ENCODE measurements at regions of chr1 and their contacts with region 1.

Region 1: GRCh38 chr1:158124999-158125398 is 55.7 kb upstream of the CD1D start:
- DNase-seq: peak; percentile 85
- H3K4me3 Mint-ChIP-seq: no peak overlapping the region
- H3K27ac Mint-ChIP-seq: no peak overlapping the region
- H3K4me1 Mint-ChIP-seq: peaks cover 23% of the 10 kb centered on the region
- H3K27me3 Mint-ChIP-seq: peaks cover 46% of the 10 kb centered on the region
- CTCF ChIP-seq: peak; percentile 91

Region 2: DNA sequence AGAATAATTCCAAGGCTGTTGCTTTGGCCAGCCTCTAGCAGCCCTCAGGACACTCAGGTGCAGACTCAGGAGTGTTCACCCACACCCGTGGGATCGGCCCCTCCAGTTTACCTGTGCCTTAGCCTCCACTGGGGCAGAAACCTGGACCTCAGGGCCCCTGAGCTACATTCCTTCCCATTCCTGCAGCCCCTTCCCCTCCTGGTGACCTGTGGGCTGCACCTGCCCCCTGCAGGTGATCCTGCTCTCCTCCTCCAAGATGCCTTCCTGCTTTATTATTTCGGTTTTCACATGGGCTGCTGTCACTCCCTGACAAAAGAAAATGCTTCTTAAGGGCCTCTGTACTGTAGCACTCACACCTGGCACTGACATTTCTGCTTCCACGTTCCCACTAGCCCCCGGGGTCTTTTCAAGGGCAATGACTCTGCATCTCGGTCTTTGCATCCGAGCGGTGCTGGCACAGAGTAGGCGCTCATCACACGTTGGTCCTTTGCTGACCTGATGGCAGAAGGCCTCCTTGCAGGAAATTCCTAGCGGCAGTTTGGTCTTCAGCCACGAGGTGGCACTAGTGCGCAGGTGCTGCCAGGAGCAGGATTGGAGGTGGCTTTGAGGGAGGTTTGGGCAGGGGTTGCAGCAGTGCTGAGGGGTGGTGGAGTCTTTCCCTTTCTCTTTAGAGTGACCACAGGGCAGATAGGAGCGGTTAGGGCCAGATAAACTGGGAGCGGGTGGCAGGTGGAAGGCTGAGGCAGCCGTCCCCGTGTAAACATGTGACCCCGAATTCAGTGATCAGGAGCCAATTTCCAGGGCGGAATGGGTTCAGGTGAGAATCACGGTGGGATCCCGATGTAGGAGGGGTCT is 961.5 kb before region 1 on chr1:
- CTCF ChIA-PET with region 1: no interaction called
- intact Hi-C with region 1: loop called (anchors 10 kb)
- DNase-seq: peak; percentile 92
- H3K4me3 Mint-ChIP-seq: peak overlapping the region; percentile 60
- H3K27ac Mint-ChIP-seq: peak overlapping the region; percentile 6
- H3K4me1 Mint-ChIP-seq: peaks cover 13% of the 10 kb centered on the region
- H3K27me3 Mint-ChIP-seq: peaks cover 51% of the 10 kb centered on the region
- CTCF ChIP-seq: peak; percentile 88

Region 3: GRCh38 chr1:157496121-157496526 is 628.9 kb before region 1 on chr1:
- CTCF ChIA-PET with region 1: interaction called, 13 read pairs
- intact Hi-C with region 1: no loop called
- DNase-seq: peak; percentile 70
- H3K4me3 Mint-ChIP-seq: no peak overlapping the region
- H3K27ac Mint-ChIP-seq: no peak overlapping the region
- H3K4me1 Mint-ChIP-seq: no peaks in the 10 kb centered on the region
- H3K27me3 Mint-ChIP-seq: peaks cover 53% of the 10 kb centered on the region
- CTCF ChIP-seq: peak; percentile 90

Region 4: GRCh38 chr1:157963713-157964112 is 161.3 kb before region 1 on chr1:
- CTCF ChIA-PET with region 1: interaction called, 175 read pairs
- intact Hi-C with region 1: loop called (anchors 1 kb)
- DNase-seq: peak; percentile 85
- H3K4me3 Mint-ChIP-seq: no peak overlapping the region
- H3K27ac Mint-ChIP-seq: peak overlapping the region; percentile 51
- H3K4me1 Mint-ChIP-seq: peaks cover 57% of the 10 kb centered on the region
- H3K27me3 Mint-ChIP-seq: no peaks in the 10 kb centered on the region
- CTCF ChIP-seq: peak; percentile 97

Region 5: GRCh38 chr1:158095737-158096335 is 29.2 kb before region 1 on chr1:
- CTCF ChIA-PET with region 1: interaction called, 31 read pairs
- intact Hi-C with region 1: no loop called
- DNase-seq: peak; percentile 43
- H3K4me3 Mint-ChIP-seq: no peak overlapping the region
- H3K27ac Mint-ChIP-seq: no peak overlapping the region
- H3K4me1 Mint-ChIP-seq: no peaks in the 10 kb centered on the region
- H3K27me3 Mint-ChIP-seq: no peaks in the 10 kb centered on the region
- CTCF ChIP-seq: peak; percentile 70

Region 6: GRCh38 chr1:159071970-159072582 is 947.1 kb after region 1 on chr1:
- CTCF ChIA-PET with region 1: no interaction called
- intact Hi-C with region 1: loop called (anchors 5 kb)
- DNase-seq: peak; percentile 12
- H3K4me3 Mint-ChIP-seq: no peak overlapping the region
- H3K27ac Mint-ChIP-seq: no peak overlapping the region
- H3K4me1 Mint-ChIP-seq: no peaks in the 10 kb centered on the region
- H3K27me3 Mint-ChIP-seq: peaks cover 7% of the 10 kb centered on the region
- CTCF ChIP-seq: peak; percentile 72

Measured in Calu3 (cell line).